ENCODE measurements at regions of chr11 and their contacts with region 1.

Region 1: GRCh38 chr11:76235233-76236091 is 29.2 kb upstream of the WNT11 start:
- DNase-seq: peak; percentile 86 to 92
- H3K4me3 ChIP-seq: peak overlapping the region; percentile 66
- H3K27ac ChIP-seq: peak overlapping the region; percentile 48
- H3K4me1 ChIP-seq: peaks cover 14% of the 10 kb centered on the region
- H3K27me3 ChIP-seq: no peaks in the 10 kb centered on the region
- CTCF ChIP-seq: no peak

Region 2: GRCh38 chr11:74427385-74427886 is 1808.0 kb before region 1 on chr11:
- CTCF ChIA-PET with region 1: no interaction called
- POLR2A ChIA-PET with region 1: interaction called, 12 read pairs
- intact Hi-C with region 1: no loop called
- DNase-seq: no peak
- H3K4me3 ChIP-seq: no peak overlapping the region
- H3K27ac ChIP-seq: no peak overlapping the region
- H3K4me1 ChIP-seq: no peaks in the 10 kb centered on the region
- H3K27me3 ChIP-seq: no peaks in the 10 kb centered on the region
- CTCF ChIP-seq: no peak

Region 3: DNA sequence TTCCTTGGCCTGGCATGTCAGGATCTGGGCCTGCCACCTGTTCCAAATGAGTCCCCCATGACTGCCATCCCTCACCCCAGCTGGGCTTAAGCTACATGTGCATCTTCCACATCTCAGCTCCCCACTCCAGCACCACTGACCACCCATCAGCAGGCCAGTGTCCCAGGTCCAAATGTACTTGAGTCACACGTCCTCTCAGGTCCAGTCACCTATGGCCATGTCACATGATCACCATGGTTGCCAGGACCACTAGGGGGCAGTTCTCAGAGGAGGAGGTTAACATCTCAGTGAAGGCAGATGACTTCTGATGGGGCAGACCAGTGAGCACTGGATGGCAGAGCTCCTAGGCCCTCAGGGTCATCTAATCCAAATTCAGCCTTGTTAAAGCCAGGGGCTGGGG is 12.7 kb after region 1 on chr11:
- CTCF ChIA-PET with region 1: no interaction called
- POLR2A ChIA-PET with region 1: no interaction called
- intact Hi-C with region 1: no loop called
- DNase-seq: no peak
- H3K4me3 ChIP-seq: no peak overlapping the region
- H3K27ac ChIP-seq: no peak overlapping the region
- H3K4me1 ChIP-seq: no peaks in the 10 kb centered on the region
- H3K27me3 ChIP-seq: peaks cover 41% of the 10 kb centered on the region
- CTCF ChIP-seq: peak; percentile 47

Region 4: DNA sequence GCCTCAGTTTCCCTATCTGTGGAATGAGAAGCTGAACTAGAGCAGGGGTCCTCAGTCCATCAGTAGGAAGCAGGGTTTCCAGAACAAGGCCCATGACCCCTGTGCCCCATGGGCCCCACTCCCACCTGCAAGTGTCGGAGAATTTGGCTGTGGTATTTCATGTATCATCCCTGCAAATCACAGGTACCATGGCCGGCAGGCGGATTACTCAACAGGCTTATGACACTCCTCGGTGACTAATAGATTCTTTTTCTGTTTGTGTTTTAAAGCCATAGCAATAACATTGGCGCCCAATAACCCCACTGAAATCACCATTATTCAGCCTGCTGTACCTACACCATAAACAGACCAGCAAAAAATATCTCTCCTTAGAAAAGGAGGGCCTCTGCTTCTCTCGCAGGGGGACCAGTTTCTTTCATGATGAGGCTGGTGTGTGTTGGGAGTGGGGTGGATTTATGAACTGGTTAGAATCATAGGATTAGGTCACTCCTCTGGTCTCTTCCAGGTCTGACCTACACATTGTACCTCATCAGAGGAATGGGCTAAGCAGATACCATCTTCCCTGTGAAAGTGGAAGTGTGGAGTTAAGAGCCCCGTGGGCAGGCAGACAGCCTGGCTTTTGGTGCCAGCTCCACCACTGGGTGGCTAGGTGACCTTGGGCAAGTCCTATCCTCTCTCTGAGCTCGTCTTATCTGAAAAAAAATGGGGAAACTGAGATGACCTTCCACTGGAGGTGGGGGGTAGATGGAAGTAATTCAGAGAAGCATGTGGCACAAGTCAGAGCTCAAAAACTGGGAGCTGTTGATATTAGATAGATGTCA is 31.0 kb after region 1 on chr11:
- CTCF ChIA-PET with region 1: no interaction called
- POLR2A ChIA-PET with region 1: interaction called, 4 read pairs
- intact Hi-C with region 1: loop called (anchors 2 kb)
- DNase-seq: peak; percentile 75 to 91
- H3K4me3 ChIP-seq: no peak overlapping the region
- H3K27ac ChIP-seq: peak overlapping the region; percentile 54
- H3K4me1 ChIP-seq: peaks cover 19% of the 10 kb centered on the region
- H3K27me3 ChIP-seq: no peaks in the 10 kb centered on the region
- CTCF ChIP-seq: no peak

Measured in PC-9 (cell line).